Activated CD8-positive, alpha-beta T cell treated with anti-CD3 and anti-CD28 coated beads, Interleukin-2, amount 10 ng/mL, durations not matched to agents 7 days and 5 days (primary cell): ENCODE measurements at regions of chr15 and their contacts with region 1.

Region 1: DNA sequence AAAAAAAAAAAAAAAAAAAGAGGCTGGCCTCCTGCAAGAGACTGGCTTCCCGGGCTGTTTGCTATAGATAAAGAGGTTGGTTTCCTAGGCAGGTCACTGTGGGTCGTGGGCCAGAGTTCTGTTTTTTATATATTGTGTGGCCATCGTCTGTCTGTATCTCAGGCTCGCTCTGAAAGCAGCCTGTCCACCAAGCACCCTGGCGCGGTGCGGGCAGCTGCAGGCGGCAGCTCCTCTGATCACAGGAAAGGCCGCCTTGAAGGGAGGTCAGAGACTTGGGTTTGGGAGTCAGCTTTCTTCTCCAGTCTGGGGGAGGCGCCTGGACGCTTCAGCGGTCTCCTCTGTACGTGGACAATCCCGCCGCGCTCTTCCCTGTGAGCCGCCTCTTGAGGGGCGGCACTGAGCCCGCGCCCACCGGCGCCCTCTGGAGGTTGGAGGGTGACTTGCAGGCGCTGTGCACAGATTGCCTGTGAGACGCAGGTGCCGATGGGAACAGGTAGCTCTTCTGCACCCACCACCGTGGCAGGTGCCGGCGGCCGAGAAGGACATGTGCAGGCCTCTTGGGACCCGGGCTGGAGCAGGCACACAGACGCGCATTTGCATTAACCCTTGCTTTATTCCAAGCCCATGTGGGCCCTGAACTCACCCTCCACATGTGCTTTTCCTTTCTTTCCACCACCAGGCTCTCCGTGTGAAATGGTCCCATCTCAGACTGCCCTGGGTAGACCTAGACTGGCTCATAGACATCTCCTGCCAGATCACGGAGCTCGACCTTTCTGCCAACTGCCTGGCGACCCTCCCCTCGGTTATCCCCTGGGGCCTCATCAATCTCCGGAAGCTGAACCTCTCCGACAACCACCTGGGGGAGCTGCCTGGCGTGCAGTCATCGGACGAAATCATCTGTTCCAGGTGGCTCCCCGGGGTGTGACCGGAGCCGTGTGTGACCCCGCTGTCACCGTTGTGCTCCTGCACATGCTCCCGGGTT is 89.3 kb downstream of the LRRK1 start:
- DNase-seq: peak; percentile 90
- ATAC-seq: peak; percentile 94
- H3K4me3 Mint-ChIP-seq: peak overlapping the region; percentile 86
- H3K27ac Mint-ChIP-seq: no peak overlapping the region
- H3K4me1 Mint-ChIP-seq: peaks cover 19% of the 10 kb centered on the region
- H3K27me3 Mint-ChIP-seq: peaks cover 21% of the 10 kb centered on the region

Region 2: GRCh38 chr15:100733101-100733788 is 275.2 kb before region 1 on chr15:
- CTCF ChIA-PET with region 1: no interaction called
- POLR2A ChIA-PET with region 1: no interaction called
- DNase-seq: peak; percentile 10
- ATAC-seq: no peak
- H3K4me3 Mint-ChIP-seq: no peak overlapping the region
- H3K27ac Mint-ChIP-seq: no peak overlapping the region
- H3K4me1 Mint-ChIP-seq: no peaks in the 10 kb centered on the region
- H3K27me3 Mint-ChIP-seq: no peaks in the 10 kb centered on the region

Region 3: GRCh38 chr15:100889385-100890050 is 118.9 kb before region 1 on chr15:
- CTCF ChIA-PET with region 1: interaction called, 13 read pairs
- POLR2A ChIA-PET with region 1: no interaction called
- DNase-seq: no peak
- ATAC-seq: no peak
- H3K4me3 Mint-ChIP-seq: no peak overlapping the region
- H3K27ac Mint-ChIP-seq: no peak overlapping the region
- H3K4me1 Mint-ChIP-seq: peaks cover 2% of the 10 kb centered on the region
- H3K27me3 Mint-ChIP-seq: peaks cover 46% of the 10 kb centered on the region

Region 4: DNA sequence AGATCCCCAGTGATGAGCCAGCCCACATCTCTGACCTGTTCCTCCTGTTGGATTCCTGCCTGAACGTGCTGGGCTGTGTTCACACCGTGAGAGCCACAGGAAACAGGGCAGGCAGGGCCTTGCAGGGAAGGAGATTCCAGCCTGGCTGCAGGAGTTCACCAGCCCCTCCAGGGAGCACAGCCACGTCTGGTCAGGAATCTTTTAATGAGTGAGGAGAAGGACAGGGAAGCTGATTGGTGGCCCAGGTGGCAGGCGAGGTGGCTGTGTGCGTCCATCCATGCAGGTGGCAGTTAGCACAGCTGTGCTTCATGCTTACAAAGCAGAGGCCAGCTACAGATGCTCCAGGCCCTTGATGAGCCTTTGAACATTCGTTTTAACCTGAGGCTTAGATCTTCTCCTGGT is 78.8 kb before region 1 on chr15:
- CTCF ChIA-PET with region 1: interaction called, 12 read pairs
- POLR2A ChIA-PET with region 1: no interaction called
- DNase-seq: no peak
- ATAC-seq: no peak
- H3K4me3 Mint-ChIP-seq: no peak overlapping the region
- H3K27ac Mint-ChIP-seq: no peak overlapping the region
- H3K4me1 Mint-ChIP-seq: no peaks in the 10 kb centered on the region
- H3K27me3 Mint-ChIP-seq: peaks cover 3% of the 10 kb centered on the region

Region 5: DNA sequence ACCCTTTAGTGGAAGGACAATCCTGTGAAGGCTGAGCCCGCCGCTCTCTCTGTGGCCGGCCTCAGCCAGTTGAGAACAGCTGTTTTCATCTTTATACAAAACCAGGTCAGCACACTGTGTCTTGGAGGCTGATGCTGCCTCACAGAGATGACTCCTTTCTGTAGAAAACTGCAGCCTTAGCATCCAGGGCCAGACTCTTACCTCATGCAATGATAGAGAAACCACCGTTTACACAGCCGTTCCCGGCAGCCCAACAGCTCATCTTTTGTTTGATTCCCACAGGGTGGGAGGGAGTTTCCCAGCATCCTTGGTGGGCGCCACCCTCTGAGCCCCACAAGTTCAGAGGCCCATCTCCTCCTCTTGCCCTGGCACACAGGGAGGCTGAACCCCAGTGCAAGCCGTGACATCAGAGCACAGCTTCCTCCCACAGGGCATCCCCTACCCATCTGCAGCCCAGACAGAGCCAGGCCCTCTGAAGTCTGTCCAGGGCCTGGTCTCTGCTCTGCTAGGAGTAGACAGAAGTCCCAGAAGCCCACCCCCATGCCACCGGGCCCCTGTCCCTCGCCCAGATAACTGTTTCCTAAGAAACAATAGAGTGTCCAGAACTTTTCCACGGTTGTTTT is 15.7 kb after region 1 on chr15:
- CTCF ChIA-PET with region 1: interaction called, 41 read pairs
- POLR2A ChIA-PET with region 1: no interaction called
- DNase-seq: peak; percentile 10
- ATAC-seq: no peak
- H3K4me3 Mint-ChIP-seq: no peak overlapping the region
- H3K27ac Mint-ChIP-seq: no peak overlapping the region
- H3K4me1 Mint-ChIP-seq: no peaks in the 10 kb centered on the region
- H3K27me3 Mint-ChIP-seq: no peaks in the 10 kb centered on the region

Region 6: GRCh38 chr15:101267320-101268104 is 259.1 kb after region 1 on chr15:
- CTCF ChIA-PET with region 1: interaction called, 32 read pairs
- POLR2A ChIA-PET with region 1: no interaction called
- DNase-seq: no peak
- ATAC-seq: no peak
- H3K4me3 Mint-ChIP-seq: no peak overlapping the region
- H3K27ac Mint-ChIP-seq: no peak overlapping the region
- H3K4me1 Mint-ChIP-seq: peaks cover 6% of the 10 kb centered on the region
- H3K27me3 Mint-ChIP-seq: no peaks in the 10 kb centered on the region